Adrenal gland (tissue), 19 donors: ENCODE measurements at regions of chr11 and their contacts with region 1.

Region 1: DNA sequence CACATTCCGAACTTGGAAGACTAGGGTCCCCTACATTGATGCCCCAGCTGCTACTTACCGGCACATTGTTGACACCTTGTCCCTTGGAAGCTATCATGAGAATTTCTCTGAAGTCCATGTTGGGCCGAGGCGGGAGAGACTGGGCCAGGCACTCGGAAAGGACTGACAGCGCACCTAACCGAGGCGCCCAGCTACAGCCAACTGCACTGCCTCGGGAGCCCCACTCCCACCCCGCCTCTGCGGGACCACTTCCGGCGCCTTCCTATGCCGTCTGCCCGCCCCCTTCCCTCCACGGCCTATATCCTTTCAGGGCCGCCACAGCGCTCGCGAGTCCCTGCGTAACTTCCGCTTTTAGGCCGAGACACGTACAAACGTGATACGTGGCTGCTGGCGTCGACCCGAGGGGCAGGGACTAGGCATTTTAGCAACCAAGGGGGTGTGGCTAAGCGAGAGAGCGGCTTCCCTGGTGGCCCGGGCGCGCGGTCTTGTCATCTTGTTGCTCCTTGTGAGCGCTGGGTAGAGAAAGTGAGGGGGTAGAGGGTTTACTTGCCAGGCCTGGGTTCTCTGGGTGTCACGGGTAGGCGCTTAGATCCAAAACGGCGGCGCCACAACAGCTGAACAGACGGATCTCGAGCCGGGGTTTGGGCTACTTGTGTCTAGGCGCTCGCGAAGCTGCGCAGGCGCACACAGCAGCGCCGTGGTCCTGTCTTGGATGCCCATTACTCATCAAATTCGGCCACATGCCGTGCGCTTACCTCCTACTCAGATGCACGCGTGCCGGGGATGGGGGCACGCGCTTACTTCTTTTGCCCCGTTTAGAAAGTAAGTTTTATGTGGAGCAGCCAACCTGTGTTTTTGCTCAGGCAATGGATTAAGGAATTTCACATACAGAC is at the start of gene SPTY2D1:
- DNase-seq: peak; percentile 99 to 100 (median 100)
- H3K4me3 ChIP-seq: peak within 1 kb of the TSS; percentile 35 to 75 (median 64)
- H3K27ac ChIP-seq: peak within 1 kb of the TSS; percentile 86 to 98 (median 88)
- H3K4me1 ChIP-seq: peaks cover 12 to 27% of the 10 kb centered on the region in 2 donors
- H3K27me3 ChIP-seq: no peaks in the 10 kb centered on the region
- CTCF ChIP-seq: peak in 2 of 6 experiments; percentile 5 to 32
- POLR2A ChIP-seq: peak; percentile 92 to 95
- total RNA-seq, gene SPTY2D1: 11.1 to 36.8 (median 18.7) TPM

Region 2: DNA sequence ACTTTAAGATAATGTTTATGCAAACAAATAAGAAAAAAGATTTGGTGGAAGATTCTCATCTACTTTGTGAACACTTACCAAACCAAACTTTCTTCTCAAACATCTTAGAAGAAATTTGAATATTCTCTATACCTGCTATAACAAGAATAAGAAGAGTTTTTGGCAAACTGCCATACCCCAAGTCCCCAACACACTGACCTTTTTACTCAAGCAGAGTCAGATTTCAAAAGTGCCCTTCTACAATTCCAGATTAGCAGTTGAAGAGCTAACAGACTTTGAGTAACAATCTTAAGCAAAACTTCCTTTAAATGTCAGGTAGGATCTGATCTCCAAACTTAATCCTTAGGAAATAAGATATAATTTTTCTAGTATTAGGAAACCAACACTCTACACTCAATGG is 141.5 kb before region 1 on chr11:
- intact Hi-C with region 1: no loop called
- DNase-seq: no peak
- H3K4me3 ChIP-seq: no peak overlapping the region
- H3K27ac ChIP-seq: no peak overlapping the region
- H3K4me1 ChIP-seq: peaks cover 0 to 12% of the 10 kb centered on the region in 2 donors
- H3K27me3 ChIP-seq: no peaks in the 10 kb centered on the region
- CTCF ChIP-seq: no peak
- POLR2A ChIP-seq: no peak

Region 3: GRCh38 chr11:18588297-18589252 is 45.8 kb before region 1 on chr11 and contains the start of gene UEVLD:
- intact Hi-C with region 1: loop called in 1 of 2 experiments (anchors 10 kb)
- DNase-seq: peak; percentile 89 to 94 (median 92)
- H3K4me3 ChIP-seq: peak within 1 kb of the TSS; percentile 15 to 80 (median 70)
- H3K27ac ChIP-seq: peak within 1 kb of the TSS; percentile 63 to 90 (median 81)
- H3K4me1 ChIP-seq: peaks cover 27 to 48% of the 10 kb centered on the region in 2 donors
- H3K27me3 ChIP-seq: no peaks in the 10 kb centered on the region
- CTCF ChIP-seq: no peak
- POLR2A ChIP-seq: peak; percentile 35 to 62
- total RNA-seq, gene UEVLD: 9.6 to 32.8 (median 25.9) TPM